Activated B cell treated with CpG ODN at 0.5 μM for 24 hours (primary cell): ENCODE measurements at regions of chr14 and their contacts with region 1.

Region 1: GRCh38 chr14:64520701-64521100 is 16.1 kb downstream of the ZBTB1 start:
- DNase-seq: no peak
- ATAC-seq: no peak
- H3K4me3 Mint-ChIP-seq: no peak overlapping the region
- H3K27ac Mint-ChIP-seq: no peak overlapping the region
- H3K4me1 Mint-ChIP-seq: peaks cover 21% of the 10 kb centered on the region
- H3K27me3 Mint-ChIP-seq: no peaks in the 10 kb centered on the region
- CTCF ChIP-seq: no peak

Region 2: GRCh38 chr14:64253672-64254071 is 267.0 kb before region 1 on chr14:
- CTCF ChIA-PET with region 1: no interaction called
- POLR2A ChIA-PET with region 1: no interaction called
- intact Hi-C with region 1: no loop called
- DNase-seq: no peak
- ATAC-seq: no peak
- H3K4me3 Mint-ChIP-seq: no peak overlapping the region
- H3K27ac Mint-ChIP-seq: no peak overlapping the region
- H3K4me1 Mint-ChIP-seq: no peaks in the 10 kb centered on the region
- H3K27me3 Mint-ChIP-seq: no peaks in the 10 kb centered on the region
- CTCF ChIP-seq: no peak

Region 3: GRCh38 chr14:64400829-64401459 is 119.8 kb before region 1 on chr14:
- CTCF ChIA-PET with region 1: no interaction called
- POLR2A ChIA-PET with region 1: interaction called, 12 read pairs
- intact Hi-C with region 1: no loop called
- DNase-seq: no peak
- ATAC-seq: no peak
- H3K4me3 Mint-ChIP-seq: peak overlapping the region; percentile 3
- H3K27ac Mint-ChIP-seq: peak overlapping the region; percentile 47
- H3K4me1 Mint-ChIP-seq: peaks cover 8% of the 10 kb centered on the region
- H3K27me3 Mint-ChIP-seq: no peaks in the 10 kb centered on the region
- CTCF ChIP-seq: no peak